OCI-LY7 (cell line): ENCODE measurements at regions of chr9 and their contacts with region 1.

Region 1: DNA sequence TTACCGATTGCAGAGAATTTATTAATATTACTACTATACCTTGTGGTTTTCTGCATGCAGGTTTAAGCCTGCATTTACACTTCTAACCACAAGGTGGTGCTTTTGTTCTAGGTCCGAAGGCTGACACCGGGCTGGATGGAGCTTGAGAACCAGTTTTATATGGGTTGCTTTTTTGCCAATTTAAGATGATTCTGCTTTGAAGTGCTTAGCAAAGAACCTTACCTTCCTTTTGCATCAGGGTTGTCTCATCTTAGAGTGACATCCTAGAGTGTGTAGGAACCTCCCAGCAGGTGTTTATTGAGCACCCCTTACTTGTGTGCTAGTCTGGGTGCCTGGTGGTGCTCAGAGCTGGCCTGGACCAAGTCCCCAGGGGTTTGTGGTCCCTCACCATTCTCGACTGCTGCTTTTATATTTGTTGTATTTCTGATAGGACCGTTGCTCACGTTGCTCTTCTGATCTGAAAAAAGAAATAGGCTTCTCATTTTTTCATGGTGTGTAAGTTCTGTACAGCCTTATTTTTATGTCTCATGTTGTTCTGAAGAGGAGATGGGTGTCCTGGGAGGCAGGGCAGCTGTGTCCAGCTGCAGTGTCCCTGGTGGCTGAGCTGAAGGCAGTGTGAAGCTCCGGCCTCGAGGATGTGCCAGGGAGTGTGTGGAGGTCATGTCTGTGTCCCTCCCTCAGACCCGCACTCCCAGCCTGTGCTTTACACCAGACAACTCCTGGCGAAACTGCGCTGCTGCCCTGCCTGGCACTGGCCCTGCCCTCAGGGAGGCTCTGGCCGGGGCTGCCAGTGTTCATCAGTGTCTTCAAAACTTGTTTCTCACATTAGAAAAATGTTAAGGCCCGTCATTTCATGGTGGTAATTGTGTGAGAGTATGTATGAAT is 54.3 kb downstream of the EHMT1 start:
- DNase-seq: peak; percentile 95
- H3K4me3 ChIP-seq: peak overlapping the region; percentile 48
- H3K27ac ChIP-seq: peak overlapping the region; percentile 95
- H3K4me1 ChIP-seq: peaks cover 94% of the 10 kb centered on the region
- CTCF ChIP-seq: peak; percentile 96

Region 2: GRCh38 chr9:135907431-135908092 is 1765.6 kb before region 1 on chr9 and contains the start of gene CAMSAP1:
- CTCF ChIA-PET with region 1: no interaction called
- POLR2A ChIA-PET with region 1: no interaction called
- intact Hi-C with region 1: no loop called
- DNase-seq: peak; percentile 94
- H3K4me3 ChIP-seq: peak within 1 kb of the TSS; percentile 81
- H3K27ac ChIP-seq: peak within 1 kb of the TSS; percentile 26
- H3K4me1 ChIP-seq: peaks cover 45% of the 10 kb centered on the region
- CTCF ChIP-seq: no peak
- total RNA-seq, gene CAMSAP1: 20.1 and 30.4 TPM in 2 replicates

Region 3: GRCh38 chr9:136694236-136694942 is 978.8 kb before region 1 on chr9:
- CTCF ChIA-PET with region 1: no interaction called
- POLR2A ChIA-PET with region 1: no interaction called
- intact Hi-C with region 1: no loop called
- DNase-seq: no peak
- H3K4me3 ChIP-seq: no peak overlapping the region
- H3K27ac ChIP-seq: no peak overlapping the region
- H3K4me1 ChIP-seq: no peaks in the 10 kb centered on the region
- CTCF ChIP-seq: peak; percentile 63

Region 4: DNA sequence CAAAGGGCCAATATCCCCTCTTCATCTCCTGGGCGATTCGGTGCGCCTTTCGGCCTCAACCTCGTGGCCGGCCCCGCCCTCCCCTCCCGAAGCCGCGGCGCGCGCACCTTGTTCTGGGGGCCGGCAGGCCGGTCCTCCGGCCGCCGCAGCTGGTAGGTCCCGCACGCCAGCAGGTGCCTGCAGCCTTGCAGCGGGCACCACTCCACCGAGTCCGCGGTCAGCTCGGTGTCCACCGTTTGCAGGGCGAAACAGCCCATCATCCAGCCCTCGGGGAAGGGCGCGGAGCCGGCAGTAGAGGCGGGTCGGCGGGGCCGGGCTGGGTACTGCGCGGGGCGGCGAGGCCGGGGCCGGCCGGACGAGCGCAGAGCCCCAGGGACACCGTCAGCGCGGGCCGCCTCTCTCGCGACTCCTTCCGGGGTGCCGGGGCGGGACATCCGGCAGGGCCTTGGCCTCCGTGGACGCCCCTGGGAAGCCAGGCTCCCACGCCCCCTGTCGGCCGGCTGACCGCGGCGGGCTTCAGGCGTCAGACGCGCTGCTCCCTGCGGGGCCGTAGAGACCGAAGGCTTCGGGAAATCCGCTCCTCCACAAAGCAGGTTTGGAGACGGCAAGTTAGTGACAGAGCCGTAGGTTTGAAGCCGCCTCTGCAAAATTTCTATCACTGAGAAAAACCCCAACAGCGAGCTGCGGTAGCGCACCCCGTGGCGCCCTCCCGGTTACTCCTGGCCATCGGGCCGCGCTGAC is 94.5 kb before region 1 on chr9 and contains the start of gene DPH7:
- CTCF ChIA-PET with region 1: no interaction called
- POLR2A ChIA-PET with region 1: interaction called, 3 read pairs
- intact Hi-C with region 1: loop called (anchors 5 kb)
- DNase-seq: peak; percentile 94
- H3K4me3 ChIP-seq: peak within 1 kb of the TSS; percentile 97
- H3K27ac ChIP-seq: peak within 1 kb of the TSS; percentile 84
- H3K4me1 ChIP-seq: peaks cover 40% of the 10 kb centered on the region
- CTCF ChIP-seq: peak; percentile 89
- total RNA-seq, gene DPH7: 71.7 and 72.9 TPM in 2 replicates

Region 5: GRCh38 chr9:137642118-137642601 is 31.0 kb before region 1 on chr9:
- CTCF ChIA-PET with region 1: no interaction called
- POLR2A ChIA-PET with region 1: interaction called, 12 read pairs
- intact Hi-C with region 1: no loop called
- DNase-seq: no peak
- H3K4me3 ChIP-seq: no peak overlapping the region
- H3K27ac ChIP-seq: no peak overlapping the region
- H3K4me1 ChIP-seq: peaks cover 38% of the 10 kb centered on the region
- CTCF ChIP-seq: no peak

Region 6: DNA sequence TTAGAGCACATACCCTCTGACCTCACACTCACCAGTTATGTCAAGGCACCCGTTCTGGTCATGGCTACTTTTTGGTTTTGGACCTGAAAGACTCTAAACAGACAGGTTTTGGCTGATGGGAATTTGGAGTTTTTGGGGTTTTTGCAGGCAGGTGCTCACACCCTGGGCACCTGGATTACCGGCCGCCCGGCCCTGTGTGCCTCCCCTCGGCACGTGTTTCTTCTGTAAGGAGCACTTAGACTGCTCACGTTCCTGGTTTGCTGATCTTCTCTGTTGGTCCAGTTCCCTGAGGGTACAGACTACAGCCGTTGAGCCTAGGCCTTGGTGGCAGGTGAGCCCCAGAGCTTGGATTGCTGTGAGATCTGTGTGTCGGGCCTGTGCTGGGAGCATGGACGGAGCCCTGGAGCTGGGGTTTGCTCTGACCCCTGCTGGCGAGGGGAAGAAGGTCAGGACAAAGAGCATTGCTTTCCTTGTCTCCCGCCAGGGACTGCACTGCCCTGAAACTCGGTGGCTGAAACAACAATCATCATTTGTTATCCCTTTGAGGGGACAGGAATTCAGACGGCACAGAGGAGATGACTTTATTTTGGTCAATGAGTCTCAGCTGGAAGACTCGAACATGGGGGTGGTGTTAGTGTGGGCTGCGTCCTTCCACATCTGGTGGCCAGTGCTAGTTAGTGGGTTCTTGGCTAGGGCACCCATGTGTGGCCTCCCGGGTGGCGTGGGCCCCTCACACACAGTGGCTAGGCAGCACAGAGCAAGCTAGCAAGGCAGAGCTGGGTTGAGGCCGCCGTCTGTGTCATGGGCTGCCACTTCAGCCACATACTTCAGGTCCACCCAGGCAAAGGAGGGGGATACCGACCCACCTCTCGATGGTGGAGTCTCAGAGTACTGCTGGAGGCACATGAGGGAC is 22.1 kb after region 1 on chr9:
- CTCF ChIA-PET with region 1: interaction called, 5 read pairs
- POLR2A ChIA-PET with region 1: no interaction called
- intact Hi-C with region 1: loop called (anchors 1 kb)
- DNase-seq: peak; percentile 79
- H3K4me3 ChIP-seq: no peak overlapping the region
- H3K27ac ChIP-seq: peak overlapping the region; percentile 60
- H3K4me1 ChIP-seq: peaks cover 35% of the 10 kb centered on the region
- CTCF ChIP-seq: peak; percentile 90

Region 7: DNA sequence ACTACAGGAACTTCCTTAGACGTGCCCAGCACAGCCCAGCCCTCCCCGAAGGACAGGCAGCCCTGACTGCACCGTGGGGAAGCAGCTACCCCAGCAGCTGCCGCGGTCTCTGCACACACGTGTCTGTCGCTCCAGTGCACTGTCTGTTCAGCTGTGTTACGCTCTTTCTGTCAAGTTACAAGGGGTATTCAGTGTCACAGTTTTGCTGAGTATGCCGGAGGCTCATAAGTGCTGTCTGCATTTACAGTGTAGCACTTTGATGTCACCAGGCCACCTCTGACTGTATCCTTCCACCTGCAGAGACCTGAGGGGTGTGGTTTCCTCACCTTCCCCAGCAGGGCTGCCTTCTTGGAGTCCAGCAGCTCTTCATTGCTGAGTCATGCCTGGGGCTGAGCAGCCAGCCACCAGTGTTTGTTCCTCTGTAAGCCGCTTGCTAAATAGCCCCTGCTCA is 72.4 kb after region 1 on chr9:
- CTCF ChIA-PET with region 1: interaction called, 3 read pairs
- POLR2A ChIA-PET with region 1: no interaction called
- intact Hi-C with region 1: loop called (anchors 2 kb)
- DNase-seq: peak; percentile 85
- H3K4me3 ChIP-seq: no peak overlapping the region
- H3K27ac ChIP-seq: peak overlapping the region; percentile 63
- H3K4me1 ChIP-seq: peaks cover 36% of the 10 kb centered on the region
- CTCF ChIP-seq: no peak

Region 8: GRCh38 chr9:137772281-137772873 is 99.2 kb after region 1 on chr9:
- CTCF ChIA-PET with region 1: no interaction called
- POLR2A ChIA-PET with region 1: interaction called, 3 read pairs
- intact Hi-C with region 1: loop called (anchors 10 kb)
- DNase-seq: peak; percentile 41
- H3K4me3 ChIP-seq: no peak overlapping the region
- H3K27ac ChIP-seq: no peak overlapping the region
- H3K4me1 ChIP-seq: no peaks in the 10 kb centered on the region
- CTCF ChIP-seq: peak; percentile 61

Region 9: GRCh38 chr9:137788561-137789294 is 115.6 kb after region 1 on chr9:
- CTCF ChIA-PET with region 1: no interaction called
- POLR2A ChIA-PET with region 1: no interaction called
- intact Hi-C with region 1: no loop called
- DNase-seq: no peak
- H3K4me3 ChIP-seq: no peak overlapping the region
- H3K27ac ChIP-seq: no peak overlapping the region
- H3K4me1 ChIP-seq: no peaks in the 10 kb centered on the region
- CTCF ChIP-seq: no peak

Region 10: DNA sequence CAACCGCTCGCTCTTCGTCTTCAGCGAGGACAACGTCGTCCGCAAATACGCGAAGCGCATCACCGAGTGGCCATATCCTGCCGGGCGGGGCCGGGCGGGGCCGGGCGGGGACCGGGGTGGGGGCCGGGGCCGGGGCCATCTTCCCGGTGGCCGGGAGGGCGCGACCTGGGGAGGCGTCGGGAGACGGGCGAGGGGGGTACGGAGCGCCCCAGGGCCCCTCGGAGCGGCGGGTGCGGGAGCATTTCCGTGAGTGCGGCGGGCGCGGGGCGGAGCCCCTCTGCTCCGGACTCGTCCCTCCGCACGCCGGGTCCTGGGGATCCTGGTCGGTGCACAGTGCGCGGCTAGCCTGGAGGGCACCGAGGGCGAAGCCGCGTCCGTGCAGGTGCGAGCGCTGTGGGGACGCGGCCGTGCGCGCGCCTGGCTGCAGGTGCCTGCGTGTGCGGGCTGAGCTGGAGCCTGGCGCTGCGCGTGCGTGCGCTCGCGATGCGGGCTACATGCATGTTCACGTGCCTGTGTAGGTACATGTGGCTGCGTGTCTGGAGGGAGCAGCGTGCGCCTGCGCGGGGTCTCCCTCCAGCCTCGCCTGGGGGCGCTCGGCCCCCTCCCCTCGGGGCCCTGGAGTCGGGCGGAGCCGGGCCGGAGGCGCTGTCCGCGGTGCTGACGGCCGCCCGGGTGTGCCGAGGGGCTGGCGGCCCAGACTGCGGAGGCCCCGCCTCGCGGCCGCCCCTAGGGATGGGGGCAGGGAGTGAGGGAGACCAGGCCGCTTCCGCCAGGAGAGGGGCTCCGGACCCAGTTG is 205.2 kb after region 1 on chr9:
- CTCF ChIA-PET with region 1: no interaction called
- POLR2A ChIA-PET with region 1: no interaction called
- intact Hi-C with region 1: no loop called
- DNase-seq: no peak
- H3K4me3 ChIP-seq: no peak overlapping the region
- H3K27ac ChIP-seq: no peak overlapping the region
- H3K4me1 ChIP-seq: no peaks in the 10 kb centered on the region
- CTCF ChIP-seq: no peak